ENCODE measurements at regions of chr20 and their contacts with region 1.

Region 1: GRCh38 chr20:34676642-34677373 is at the start of gene PIGU:
- DNase-seq: peak; percentile 92
- ATAC-seq: peak; percentile 98
- H3K4me3 ChIP-seq: peak within 1 kb of the TSS; percentile 80 to 93 (median 86)
- H3K27ac ChIP-seq: peak within 1 kb of the TSS; percentile 75 to 88 (median 81)
- H3K4me1 ChIP-seq: peaks cover 9% of the 10 kb centered on the region in 2 donors
- H3K27me3 ChIP-seq: no peaks in the 10 kb centered on the region
- CTCF ChIP-seq: peak in 4 of 5 experiments; percentile 31 to 38 (median 34)
- POLR2A ChIP-seq: peak; percentile 61 to 62
- total RNA-seq, gene PIGU: 12.8 to 14.1 (median 13.7) TPM

Region 2: GRCh38 chr20:34579191-34579978 is 97.4 kb before region 1 on chr20:
- in situ Hi-C with region 1: no loop called
- intact Hi-C with region 1: no loop called
- DNase-seq: peak; percentile 61 to 78
- ATAC-seq: peak; percentile 94 to 98
- H3K4me3 ChIP-seq: no peak overlapping the region
- H3K27ac ChIP-seq: peak overlapping the region; percentile 60 to 76 (median 64)
- H3K4me1 ChIP-seq: peaks cover 24 to 35% of the 10 kb centered on the region in 2 donors
- H3K27me3 ChIP-seq: no peaks in the 10 kb centered on the region
- CTCF ChIP-seq: peak; percentile 43 to 74 (median 67)
- POLR2A ChIP-seq: no peak

Region 3: DNA sequence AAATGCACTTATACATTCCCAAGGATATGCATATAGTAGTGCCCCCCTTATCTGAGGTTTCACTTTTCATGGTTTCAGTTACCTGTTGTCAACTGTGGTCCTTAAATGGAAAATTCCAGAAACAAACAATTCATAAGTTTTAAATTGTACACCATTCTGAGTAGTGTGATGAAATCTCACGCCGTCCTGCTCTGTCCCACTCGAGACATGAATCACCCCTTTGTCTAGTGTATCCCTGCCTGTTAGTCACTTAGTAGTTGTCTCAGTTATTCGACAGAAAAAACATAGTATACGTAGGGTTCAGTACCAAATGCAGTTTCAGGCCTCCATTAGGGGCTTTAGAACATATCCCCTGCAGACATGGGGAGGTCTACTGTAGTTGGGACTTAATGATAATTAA is 61.3 kb before region 1 on chr20:
- in situ Hi-C with region 1: no loop called
- intact Hi-C with region 1: no loop called
- DNase-seq: no peak
- ATAC-seq: no peak
- H3K4me3 ChIP-seq: no peak overlapping the region
- H3K27ac ChIP-seq: no peak overlapping the region
- H3K4me1 ChIP-seq: no peaks in the 10 kb centered on the region
- H3K27me3 ChIP-seq: no peaks in the 10 kb centered on the region
- CTCF ChIP-seq: no peak
- POLR2A ChIP-seq: no peak

Region 4: DNA sequence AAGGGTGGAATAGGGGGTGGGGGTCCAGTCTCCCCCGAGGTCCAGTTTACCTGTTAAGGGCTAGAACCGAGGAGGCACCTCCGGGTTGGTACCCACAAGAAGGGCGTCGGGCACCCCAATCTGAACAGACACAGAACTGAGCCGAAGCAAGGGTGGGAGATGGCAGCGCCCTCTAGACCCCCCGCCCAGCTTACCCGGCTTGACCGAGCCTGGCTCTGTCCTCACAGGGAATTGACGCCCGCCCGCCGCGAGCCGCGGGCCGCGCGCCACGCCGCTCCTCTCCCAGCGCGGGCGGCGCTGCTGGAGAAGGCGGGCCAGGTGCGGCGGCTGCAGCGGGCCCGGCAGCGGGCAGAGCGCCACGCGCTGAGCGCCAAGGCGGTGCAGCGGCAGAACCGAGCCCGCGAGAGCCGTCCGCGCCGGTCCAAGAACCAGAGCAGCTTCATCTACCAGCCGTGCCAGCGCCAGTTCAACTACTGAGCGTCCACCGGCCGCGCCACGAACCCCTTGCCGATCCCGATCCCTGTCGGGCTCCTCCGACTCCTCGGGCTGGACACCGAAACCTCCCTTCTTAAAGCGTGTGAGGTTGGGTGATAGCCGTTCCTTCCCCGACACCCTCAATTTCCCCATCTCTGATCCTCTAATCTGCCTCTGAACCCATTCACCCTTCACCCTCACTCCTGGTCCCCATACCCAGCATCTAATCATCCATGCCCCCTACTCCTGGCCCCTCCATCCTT is 33.2 kb after region 1 on chr20:
- in situ Hi-C with region 1: loop called in 1 of 4 experiments (anchors 5 kb)
- intact Hi-C with region 1: no loop called
- DNase-seq: peak; percentile 44 to 80
- ATAC-seq: peak; percentile 51 to 64
- H3K4me3 ChIP-seq: peak overlapping the region; percentile 52 to 75 (median 72)
- H3K27ac ChIP-seq: peak overlapping the region; percentile 94 to 100 (median 95)
- H3K4me1 ChIP-seq: peaks cover 37 to 50% of the 10 kb centered on the region in 2 donors
- H3K27me3 ChIP-seq: no peaks in the 10 kb centered on the region
- CTCF ChIP-seq: peak in 2 of 5 experiments; percentile 15 to 26
- POLR2A ChIP-seq: no peak

Region 5: DNA sequence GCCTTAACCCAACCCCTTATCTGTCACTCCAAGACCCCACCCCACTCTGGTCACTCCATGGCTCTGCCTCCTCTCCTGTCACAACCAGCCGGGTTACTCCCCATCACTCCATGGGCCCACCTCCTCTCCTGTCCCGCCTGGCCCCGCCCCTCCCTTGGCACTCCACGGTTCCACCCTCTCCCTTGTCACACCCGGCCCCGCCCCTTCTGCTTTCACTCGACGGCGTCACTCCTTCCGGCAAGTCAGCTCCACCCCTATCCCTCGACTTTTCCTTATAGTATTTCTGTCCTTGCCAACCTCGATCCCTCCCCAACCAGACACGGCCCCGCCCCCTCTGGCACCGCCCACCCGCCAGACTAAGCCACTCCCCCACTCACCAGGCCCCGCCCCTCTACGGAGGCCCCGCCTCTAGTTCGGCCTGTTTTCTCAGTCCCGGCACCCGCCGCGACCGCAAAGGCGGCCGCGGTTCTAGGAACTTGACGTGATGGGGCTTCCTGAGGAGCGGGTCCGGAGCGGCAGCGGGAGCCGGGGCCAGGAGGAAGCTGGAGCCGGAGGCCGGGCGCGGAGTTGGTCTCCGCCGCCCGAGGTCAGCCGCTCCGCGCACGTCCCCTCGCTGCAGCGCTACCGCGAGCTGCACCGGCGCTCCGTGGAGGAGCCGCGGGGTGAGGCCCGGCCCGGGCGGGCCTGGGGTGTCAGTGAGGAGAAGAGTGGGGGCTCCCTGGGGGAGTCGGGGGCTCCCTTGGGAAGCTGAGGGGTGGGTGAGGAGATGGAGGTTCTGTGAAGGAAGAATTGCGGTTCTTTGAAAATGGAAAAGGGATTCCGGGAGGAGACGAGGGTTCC is 199.6 kb after region 1 on chr20 and contains the start of gene ACSS2:
- in situ Hi-C with region 1: no loop called
- intact Hi-C with region 1: no loop called
- DNase-seq: peak; percentile 98 to 99
- ATAC-seq: peak; percentile 77 to 83
- H3K4me3 ChIP-seq: peak within 1 kb of the TSS; percentile 73 to 92 (median 83)
- H3K27ac ChIP-seq: peak within 1 kb of the TSS; percentile 87 to 97 (median 96)
- H3K4me1 ChIP-seq: peaks cover 44 to 54% of the 10 kb centered on the region in 2 donors
- H3K27me3 ChIP-seq: no peaks in the 10 kb centered on the region
- CTCF ChIP-seq: peak in 1 of 5 experiments; percentile 14
- POLR2A ChIP-seq: peak; percentile 90 to 94
- total RNA-seq, gene ACSS2: 70.5 to 94.7 (median 88.1) TPM